AG04450 (cell line): ENCODE measurements at regions of chr19 and their contacts with region 1.

Region 1: DNA sequence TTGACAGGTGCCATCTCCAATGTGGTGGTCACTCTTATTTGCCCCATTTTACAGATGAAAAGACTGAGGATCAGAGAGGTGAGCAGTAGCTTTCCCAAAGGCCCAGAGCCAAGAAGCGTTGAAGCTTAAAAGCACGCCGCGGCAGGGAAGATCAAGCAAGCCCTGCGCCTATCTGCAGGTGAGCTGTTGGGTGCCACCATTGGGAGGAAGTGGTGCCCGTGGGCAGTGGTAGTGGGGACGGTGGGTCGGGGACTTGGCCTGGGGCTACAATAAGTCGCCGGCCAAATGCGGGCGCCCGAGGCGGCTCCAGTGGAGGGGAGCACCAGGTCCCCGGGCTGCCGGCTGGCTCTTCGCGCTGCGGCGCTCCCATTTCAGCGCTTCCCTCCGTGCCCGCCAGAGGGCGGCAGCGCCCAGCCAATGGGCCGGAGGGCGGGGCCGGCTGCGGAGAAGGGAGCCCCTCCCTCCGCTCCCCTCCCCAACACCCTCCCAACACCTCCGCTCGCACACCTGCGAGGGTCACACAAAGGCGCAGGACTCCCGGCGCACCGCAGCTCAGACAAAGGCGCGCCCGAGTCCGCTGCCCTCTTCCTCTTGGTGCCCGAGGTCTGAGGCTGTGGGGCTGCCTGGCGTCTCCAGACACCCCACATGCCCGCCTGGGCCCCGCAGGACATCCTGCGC is 744 bp upstream of the POU2F2 start:
- DNase-seq: no peak
- H3K4me3 ChIP-seq: peak overlapping the region; percentile 60
- H3K27ac ChIP-seq: no peak overlapping the region
- H3K27me3 ChIP-seq: peaks cover 9% of the 10 kb centered on the region
- CTCF ChIP-seq: peak; percentile 85

Region 2: GRCh38 chr19:42088471-42089190 is 44.4 kb before region 1 on chr19:
- CTCF ChIA-PET with region 1: no interaction called
- POLR2A ChIA-PET with region 1: no interaction called
- DNase-seq: peak; percentile 38
- H3K4me3 ChIP-seq: peak overlapping the region; percentile 23; the same call in 1 of the 2 replicates
- H3K27ac ChIP-seq: peak overlapping the region; percentile 83
- H3K27me3 ChIP-seq: no peaks in the 10 kb centered on the region
- CTCF ChIP-seq: no peak

Region 3: DNA sequence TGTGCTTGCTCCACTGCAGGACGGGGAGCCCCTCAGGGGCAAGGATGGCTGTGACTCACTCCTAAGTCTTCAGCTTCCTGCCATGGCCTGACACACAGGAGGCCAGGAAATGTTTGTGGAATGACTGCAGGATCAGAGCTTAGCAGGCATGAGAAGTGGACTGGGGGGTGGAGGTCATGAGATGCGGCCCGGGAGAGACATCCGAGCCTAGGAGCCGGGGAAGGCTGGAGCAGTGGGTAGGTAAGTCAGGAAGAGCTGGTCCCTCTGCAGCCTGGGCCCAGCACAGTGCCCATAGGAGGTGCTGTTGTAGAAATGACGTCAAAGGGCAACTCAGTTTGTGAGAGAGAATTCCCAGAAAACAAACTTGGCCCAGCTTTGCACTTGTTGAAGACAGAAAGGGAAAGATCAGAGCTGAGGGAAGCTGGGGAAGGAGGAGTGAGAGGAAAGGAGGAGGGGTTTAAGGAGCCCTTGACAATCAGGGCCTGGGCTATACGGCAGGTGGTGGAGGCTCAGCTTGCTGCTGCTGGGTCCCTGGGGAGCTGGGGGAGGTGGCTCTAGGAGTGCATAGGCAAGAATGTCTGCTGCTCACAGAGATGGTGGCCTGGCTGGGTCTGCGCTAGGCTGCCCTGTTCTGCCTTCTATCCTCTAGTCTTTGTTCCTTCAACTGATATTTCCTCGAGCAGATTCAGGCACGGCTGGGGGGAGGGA is 19.2 kb before region 1 on chr19:
- CTCF ChIA-PET with region 1: interaction called, 26 read pairs
- POLR2A ChIA-PET with region 1: interaction called, 4 read pairs
- DNase-seq: peak; percentile 86
- H3K4me3 ChIP-seq: peak overlapping the region; percentile 17
- H3K27ac ChIP-seq: peak overlapping the region; percentile 94
- H3K27me3 ChIP-seq: no peaks in the 10 kb centered on the region
- CTCF ChIP-seq: peak; percentile 45

Region 4: GRCh38 chr19:42121656-42122069 is 11.3 kb before region 1 on chr19:
- CTCF ChIA-PET with region 1: interaction called, 18 read pairs
- POLR2A ChIA-PET with region 1: no interaction called
- DNase-seq: peak; percentile 49
- H3K4me3 ChIP-seq: 0 out of 2 replicates have a peak overlapping the region, but pooled peaks have one; percentile 20
- H3K27ac ChIP-seq: peak overlapping the region; percentile 73
- H3K27me3 ChIP-seq: no peaks in the 10 kb centered on the region
- CTCF ChIP-seq: no peak

Region 5: DNA sequence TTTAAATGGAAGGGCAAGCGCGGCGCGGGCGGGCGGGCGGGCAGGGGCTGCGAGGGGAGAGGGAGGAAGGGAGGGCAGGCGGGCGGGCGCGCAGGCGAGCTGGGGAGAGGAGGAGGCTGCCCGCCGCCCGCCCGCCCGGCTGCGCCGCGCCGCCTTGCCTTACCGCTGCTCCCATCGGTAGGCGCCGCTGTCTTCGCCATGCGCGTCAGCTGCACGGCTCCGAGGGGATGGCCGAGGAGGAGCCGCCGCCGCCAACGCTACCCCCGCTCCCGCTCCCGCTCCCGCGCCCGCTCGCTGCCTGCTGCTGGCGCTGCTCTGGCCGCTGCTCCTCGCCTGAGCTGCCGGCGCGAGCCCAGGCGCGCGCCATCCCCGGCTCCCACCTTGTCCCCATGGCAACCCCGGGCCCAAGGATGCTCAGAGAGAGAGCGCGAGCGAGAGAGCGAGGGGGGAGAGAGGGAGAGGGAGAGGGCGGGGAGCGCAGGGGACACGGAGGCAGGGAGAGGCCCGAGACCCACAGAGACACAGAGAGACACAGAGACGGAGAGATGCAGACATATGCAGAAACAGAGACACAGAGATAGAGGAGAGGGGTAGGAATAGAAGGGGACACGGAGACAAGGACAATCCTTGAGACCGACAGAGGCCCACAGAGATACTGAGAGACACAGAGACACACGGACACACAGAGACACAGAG is 44.1 kb after region 1 on chr19:
- CTCF ChIA-PET with region 1: interaction called, 28 read pairs
- POLR2A ChIA-PET with region 1: no interaction called
- DNase-seq: peak; percentile 32
- H3K4me3 ChIP-seq: peak overlapping the region; percentile 60
- H3K27ac ChIP-seq: no peak overlapping the region
- H3K27me3 ChIP-seq: peaks cover 67% of the 10 kb centered on the region
- CTCF ChIP-seq: peak; percentile 40

Region 6: DNA sequence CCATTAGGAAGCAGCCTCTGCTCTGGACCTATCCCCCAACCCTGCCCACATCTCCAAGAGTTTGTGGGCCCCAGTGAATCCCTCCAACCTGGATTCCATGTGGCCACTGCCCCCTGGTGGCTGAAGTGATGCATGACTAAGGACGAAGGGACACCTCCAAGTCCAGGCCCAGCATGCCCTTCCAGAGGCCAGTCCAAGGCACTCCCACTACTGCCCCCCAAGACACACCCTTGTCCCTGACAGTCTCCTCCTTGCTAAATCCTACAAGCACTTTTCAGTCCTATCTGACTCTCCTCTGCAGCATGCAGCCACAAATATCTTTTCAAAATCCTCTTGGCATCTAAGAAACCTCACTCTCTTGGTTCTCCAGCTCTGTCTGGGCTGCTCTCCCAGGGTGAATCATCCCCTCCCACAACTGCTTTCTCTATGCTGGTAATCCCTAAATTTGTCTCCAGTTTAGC is 51.4 kb after region 1 on chr19:
- CTCF ChIA-PET with region 1: interaction called, 28 read pairs
- POLR2A ChIA-PET with region 1: no interaction called
- DNase-seq: peak; percentile 44
- H3K4me3 ChIP-seq: no peak overlapping the region
- H3K27ac ChIP-seq: no peak overlapping the region
- H3K27me3 ChIP-seq: peaks cover 23% of the 10 kb centered on the region
- CTCF ChIP-seq: peak; percentile 92